B cell (primary cell): ENCODE measurements at regions of chr2 and their contacts with region 1.

Region 1: GRCh38 chr2:64330281-64331113 is 123.5 kb upstream of the LGALSL start:
- DNase-seq: peak; percentile 86
- ATAC-seq: no peak
- H3K4me3 ChIP-seq: no peak overlapping the region
- H3K4me3 Mint-ChIP-seq: peak overlapping the region; percentile 16
- H3K27ac ChIP-seq: no peak overlapping the region
- H3K27ac Mint-ChIP-seq: peak overlapping the region; percentile 33
- H3K4me1 ChIP-seq: peaks cover 24 to 36% of the 10 kb centered on the region in 2 donors
- H3K4me1 Mint-ChIP-seq: peaks cover 35% of the 10 kb centered on the region
- H3K27me3 ChIP-seq: no peaks in the 10 kb centered on the region
- H3K27me3 Mint-ChIP-seq: no peaks in the 10 kb centered on the region
- CTCF ChIP-seq: peak; percentile 94

Region 2: GRCh38 chr2:64052468-64053241 is 277.8 kb before region 1 on chr2:
- CTCF ChIA-PET with region 1: interaction called, 612 read pairs
- POLR2A ChIA-PET with region 1: interaction called, 30 read pairs
- intact Hi-C with region 1: loop called (anchors 1 kb)
- DNase-seq: no peak
- ATAC-seq: no peak
- H3K4me3 ChIP-seq: no peak overlapping the region
- H3K4me3 Mint-ChIP-seq: no peak overlapping the region
- H3K27ac ChIP-seq: no peak overlapping the region
- H3K27ac Mint-ChIP-seq: no peak overlapping the region
- H3K4me1 ChIP-seq: peaks cover 10 to 12% of the 10 kb centered on the region in 2 donors
- H3K4me1 Mint-ChIP-seq: peaks cover 23% of the 10 kb centered on the region
- H3K27me3 ChIP-seq: no peaks in the 10 kb centered on the region
- H3K27me3 Mint-ChIP-seq: no peaks in the 10 kb centered on the region
- CTCF ChIP-seq: no peak

Region 3: DNA sequence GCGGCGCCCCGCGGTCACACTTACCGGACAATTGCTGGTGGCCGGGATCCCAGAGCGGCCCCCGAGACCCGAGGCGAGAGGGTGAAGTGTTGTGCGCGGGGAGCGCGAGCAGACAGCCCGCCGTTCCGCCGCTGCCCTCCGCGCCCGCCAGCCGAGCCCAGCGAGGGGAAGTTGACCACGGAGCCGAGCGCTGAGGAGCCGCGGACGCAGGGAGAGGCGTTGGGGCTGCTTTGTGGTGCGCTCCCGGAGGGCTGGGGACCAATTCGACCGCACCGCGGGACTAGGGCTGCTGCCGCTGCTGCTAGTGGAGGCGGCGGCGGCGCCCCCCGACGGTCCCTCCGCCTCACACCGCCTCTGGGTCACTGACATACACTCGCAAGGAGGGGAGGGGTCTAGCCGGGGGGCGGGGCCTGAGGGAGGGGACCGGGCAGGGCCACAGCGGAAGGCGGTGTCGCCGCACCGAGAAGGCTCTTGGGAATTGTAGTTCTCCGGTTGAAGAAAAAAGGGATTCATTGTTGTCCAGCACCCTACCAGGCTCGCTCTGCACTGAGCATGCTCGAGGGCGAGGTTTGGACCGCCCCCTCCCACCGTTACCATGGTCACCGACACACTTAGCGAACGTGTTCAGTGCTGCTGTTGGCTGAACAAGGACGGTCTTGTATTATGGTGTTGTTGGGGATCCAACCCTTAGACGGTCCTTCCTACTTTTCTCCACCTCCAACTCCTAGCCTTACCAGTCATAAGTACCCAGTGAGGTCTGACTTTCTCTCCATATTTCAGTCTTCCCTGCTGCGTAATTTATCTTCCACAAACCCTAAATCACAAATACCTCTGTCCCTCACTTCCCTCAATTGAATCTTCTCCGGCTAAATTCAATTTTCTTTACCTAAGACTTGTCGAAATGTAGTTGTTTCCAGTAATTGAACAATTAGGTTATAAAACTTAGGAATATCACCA is 186.2 kb before region 1 on chr2 and contains the start of gene PELI1:
- CTCF ChIA-PET with region 1: interaction called, 31 read pairs
- POLR2A ChIA-PET with region 1: interaction called, 18 read pairs
- intact Hi-C with region 1: loop called (anchors 1 kb)
- DNase-seq: peak; percentile 95
- ATAC-seq: peak; percentile 95
- H3K4me3 ChIP-seq: peak within 1 kb of the TSS; percentile 77 to 98 (median 85)
- H3K4me3 Mint-ChIP-seq: peak within 1 kb of the TSS; percentile 92
- H3K27ac ChIP-seq: peak within 1 kb of the TSS; percentile 81 to 86
- H3K27ac Mint-ChIP-seq: peak within 1 kb of the TSS; percentile 94
- H3K4me1 ChIP-seq: peaks cover 22 to 32% of the 10 kb centered on the region in 2 donors
- H3K4me1 Mint-ChIP-seq: peaks cover 38% of the 10 kb centered on the region
- H3K27me3 ChIP-seq: no peaks in the 10 kb centered on the region
- H3K27me3 Mint-ChIP-seq: no peaks in the 10 kb centered on the region
- CTCF ChIP-seq: peak; percentile 10
- total RNA-seq, gene PELI1: 115 and 117 TPM in 2 replicates

Region 4: GRCh38 chr2:64311948-64312621 is 18.4 kb before region 1 on chr2:
- CTCF ChIA-PET with region 1: interaction called, 30 read pairs
- POLR2A ChIA-PET with region 1: no interaction called
- intact Hi-C with region 1: no loop called
- DNase-seq: no peak
- ATAC-seq: no peak
- H3K4me3 ChIP-seq: no peak overlapping the region
- H3K4me3 Mint-ChIP-seq: no peak overlapping the region
- H3K27ac ChIP-seq: no peak overlapping the region
- H3K27ac Mint-ChIP-seq: no peak overlapping the region
- H3K4me1 ChIP-seq: no peaks in the 10 kb centered on the region
- H3K4me1 Mint-ChIP-seq: no peaks in the 10 kb centered on the region
- H3K27me3 ChIP-seq: no peaks in the 10 kb centered on the region
- H3K27me3 Mint-ChIP-seq: peaks cover 3% of the 10 kb centered on the region
- CTCF ChIP-seq: no peak

Region 5: DNA sequence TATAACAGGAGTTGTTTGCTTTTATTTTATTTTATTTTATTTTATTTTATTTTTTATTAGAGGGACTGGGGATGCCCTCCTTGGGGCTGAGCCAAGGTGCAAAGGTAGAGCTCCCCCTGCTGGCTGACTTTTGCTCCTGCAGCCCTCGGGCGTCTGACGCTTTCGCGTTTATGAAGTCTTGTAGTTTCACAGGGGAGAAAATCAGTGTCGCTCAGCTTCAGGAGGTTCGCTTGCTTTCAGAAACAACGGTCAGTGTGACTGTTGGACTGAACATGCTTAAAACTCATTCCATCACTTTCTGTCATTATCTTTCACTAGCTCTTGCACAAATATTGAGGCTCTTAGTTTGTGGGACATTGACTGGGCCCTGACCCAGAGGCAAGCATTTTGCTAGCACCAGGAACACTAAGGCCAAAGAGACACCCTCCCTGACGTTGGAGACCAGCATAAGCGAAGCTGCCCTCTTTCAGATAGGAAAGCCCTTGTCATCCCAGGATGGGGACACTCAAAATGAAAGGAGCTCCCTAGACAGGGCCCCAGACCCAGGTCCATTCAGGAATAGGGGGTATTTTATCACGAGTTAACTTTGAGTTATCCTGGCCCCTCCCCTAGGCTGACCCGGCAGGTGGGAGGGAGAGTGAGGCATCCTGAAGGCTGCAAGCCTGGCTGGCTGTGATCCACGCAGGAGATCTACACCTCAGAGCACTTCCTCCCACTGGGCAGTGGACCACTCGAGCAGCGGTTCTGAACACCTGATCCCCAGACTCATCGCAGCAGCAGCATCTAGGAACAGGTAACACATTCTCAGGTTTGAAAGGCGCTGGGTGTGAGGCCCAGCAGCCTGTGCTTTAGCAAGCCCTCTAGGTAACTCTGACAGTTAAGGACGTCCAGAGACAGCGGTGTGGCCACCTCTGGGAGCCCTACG is 157.8 kb after region 1 on chr2:
- CTCF ChIA-PET with region 1: interaction called, 398 read pairs
- POLR2A ChIA-PET with region 1: interaction called, 5 read pairs
- intact Hi-C with region 1: loop called (anchors 1 kb)
- DNase-seq: peak; percentile 80
- ATAC-seq: peak; percentile 86
- H3K4me3 ChIP-seq: no peak overlapping the region
- H3K4me3 Mint-ChIP-seq: no peak overlapping the region
- H3K27ac ChIP-seq: no peak overlapping the region
- H3K27ac Mint-ChIP-seq: no peak overlapping the region
- H3K4me1 ChIP-seq: peaks cover 3 to 4% of the 10 kb centered on the region in 2 donors
- H3K4me1 Mint-ChIP-seq: peaks cover 5% of the 10 kb centered on the region
- H3K27me3 ChIP-seq: peaks cover 0 to 3% (median 1%) of the 10 kb centered on the region in 4 experiments
- H3K27me3 Mint-ChIP-seq: peaks cover 22% of the 10 kb centered on the region
- CTCF ChIP-seq: peak; percentile 98

Region 6: GRCh38 chr2:64644177-64645004 is 313.9 kb after region 1 on chr2:
- CTCF ChIA-PET with region 1: interaction called, 6 read pairs
- POLR2A ChIA-PET with region 1: no interaction called
- intact Hi-C with region 1: loop called (anchors 2 kb)
- DNase-seq: peak; percentile 74
- ATAC-seq: peak; percentile 37
- H3K4me3 ChIP-seq: peak overlapping the region; percentile 21 to 50 (median 29)
- H3K4me3 Mint-ChIP-seq: peak overlapping the region; percentile 89
- H3K27ac ChIP-seq: peak overlapping the region; percentile 66 to 81
- H3K27ac Mint-ChIP-seq: peak overlapping the region; percentile 97
- H3K4me1 ChIP-seq: peaks cover 78 to 88% of the 10 kb centered on the region in 2 donors
- H3K4me1 Mint-ChIP-seq: peaks cover 89% of the 10 kb centered on the region
- H3K27me3 ChIP-seq: no peaks in the 10 kb centered on the region
- H3K27me3 Mint-ChIP-seq: no peaks in the 10 kb centered on the region
- CTCF ChIP-seq: no peak

Region 7: DNA sequence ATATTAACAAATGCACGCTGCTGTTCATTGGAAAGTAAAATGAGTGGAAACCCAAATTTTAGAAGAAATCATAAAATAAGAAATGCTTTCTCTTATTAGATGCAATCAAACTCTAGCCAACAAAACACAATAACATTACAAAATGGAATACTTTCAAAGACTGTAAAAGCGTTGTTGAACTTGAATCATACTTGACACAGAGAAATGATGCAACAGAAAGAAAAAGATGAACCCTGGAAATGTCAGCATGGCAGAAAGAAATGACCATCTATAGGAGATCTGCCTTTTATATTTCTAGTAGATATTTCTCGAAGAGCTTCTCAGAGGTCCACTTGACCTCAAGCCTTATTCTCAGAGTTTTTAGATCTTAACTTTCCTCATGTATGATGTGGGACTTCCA is 1933.9 kb after region 1 on chr2:
- CTCF ChIA-PET with region 1: no interaction called
- POLR2A ChIA-PET with region 1: no interaction called
- intact Hi-C with region 1: no loop called
- DNase-seq: no peak
- ATAC-seq: no peak
- H3K4me3 ChIP-seq: no peak overlapping the region
- H3K4me3 Mint-ChIP-seq: no peak overlapping the region
- H3K27ac ChIP-seq: no peak overlapping the region
- H3K27ac Mint-ChIP-seq: no peak overlapping the region
- H3K4me1 ChIP-seq: no peaks in the 10 kb centered on the region
- H3K4me1 Mint-ChIP-seq: no peaks in the 10 kb centered on the region
- H3K27me3 ChIP-seq: no peaks in the 10 kb centered on the region
- H3K27me3 Mint-ChIP-seq: no peaks in the 10 kb centered on the region
- CTCF ChIP-seq: no peak